ENCODE measurements at regions of chrX and their contacts with region 1.

Region 1: GRCh38 chrX:46686003-46686645 is 72.8 kb downstream of the SLC9A7 start:
- DNase-seq: peak; percentile 54
- H3K4me3 ChIP-seq: no peak overlapping the region
- H3K27ac ChIP-seq: no peak overlapping the region
- H3K4me1 ChIP-seq: peaks cover 24% of the 10 kb centered on the region
- CTCF ChIP-seq: peak; percentile 85

Region 2: GRCh38 chrX:46561824-46562657 is 124.1 kb before region 1 on chrX:
- CTCF ChIA-PET with region 1: no interaction called
- POLR2A ChIA-PET with region 1: interaction called, 4 read pairs
- intact Hi-C with region 1: loop called (anchors 5 kb)
- DNase-seq: peak; percentile 76
- H3K4me3 ChIP-seq: peak overlapping the region; percentile 9
- H3K27ac ChIP-seq: peak overlapping the region; percentile 57
- H3K4me1 ChIP-seq: peaks cover 24% of the 10 kb centered on the region
- CTCF ChIP-seq: no peak

Measured in OCI-LY7 (cell line).